Posterior cingulate gyrus (tissue), 11 donors: ENCODE measurements at regions of chr14 and their contacts with region 1.

Region 1: DNA sequence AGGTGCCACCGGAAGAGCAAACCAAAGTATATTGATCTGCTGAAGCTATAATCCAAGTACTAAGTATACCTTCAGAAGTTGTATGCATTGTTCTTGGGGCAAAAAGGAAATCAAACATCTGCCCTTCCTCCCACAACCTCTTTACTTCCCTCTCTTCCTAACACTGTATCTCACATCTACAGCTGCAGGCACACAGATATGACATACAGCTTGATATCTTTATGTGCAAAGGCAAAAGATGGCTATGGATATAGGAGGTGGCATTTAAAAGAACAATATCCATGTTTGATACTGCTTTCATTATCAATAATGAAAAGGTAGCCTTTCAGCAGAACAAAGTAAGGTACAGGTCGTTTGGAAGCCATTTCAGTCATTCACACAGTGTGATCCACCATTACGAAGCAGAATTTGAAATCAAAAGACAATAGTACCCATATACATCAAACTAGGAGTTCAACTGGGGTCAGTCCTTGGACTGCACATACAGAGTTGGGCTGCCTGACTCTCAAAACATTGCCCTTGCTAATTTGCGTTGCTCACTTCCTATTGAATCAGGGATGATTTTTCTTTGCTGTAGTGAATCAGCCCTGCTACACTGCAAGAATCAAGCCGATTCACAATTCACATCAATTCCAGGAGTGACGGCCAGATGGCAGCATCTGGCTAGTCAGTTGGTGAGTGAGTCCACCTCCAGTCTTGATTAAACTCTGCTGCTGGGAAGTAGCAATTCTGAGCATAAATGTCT is 8.9 kb downstream of the ANG start:
- DNase-seq: peak in 7 of 10 donors; percentile 66 to 95 (median 77)

Region 2: DNA sequence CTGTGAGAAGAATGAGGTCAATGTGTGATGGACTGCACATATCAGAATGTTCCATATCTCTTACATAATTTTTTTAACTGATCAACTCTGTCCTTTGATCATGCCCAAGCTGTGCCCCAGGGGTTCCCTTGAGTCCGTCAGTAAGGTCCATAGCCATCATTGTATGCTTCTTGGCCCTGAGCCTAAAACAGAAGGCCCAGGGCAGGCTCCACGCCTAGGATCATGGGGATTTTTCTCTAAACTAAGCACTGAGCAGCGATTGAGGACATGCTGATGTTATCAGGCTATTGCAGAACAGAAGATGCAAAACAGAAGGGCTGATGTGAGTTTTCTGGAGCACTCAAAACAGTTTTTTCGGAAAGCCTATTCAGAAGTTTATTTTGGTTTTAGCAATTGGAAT is 157.5 kb before region 1 on chr14:
- intact Hi-C with region 1: no loop called
- DNase-seq: no peak

Region 3: DNA sequence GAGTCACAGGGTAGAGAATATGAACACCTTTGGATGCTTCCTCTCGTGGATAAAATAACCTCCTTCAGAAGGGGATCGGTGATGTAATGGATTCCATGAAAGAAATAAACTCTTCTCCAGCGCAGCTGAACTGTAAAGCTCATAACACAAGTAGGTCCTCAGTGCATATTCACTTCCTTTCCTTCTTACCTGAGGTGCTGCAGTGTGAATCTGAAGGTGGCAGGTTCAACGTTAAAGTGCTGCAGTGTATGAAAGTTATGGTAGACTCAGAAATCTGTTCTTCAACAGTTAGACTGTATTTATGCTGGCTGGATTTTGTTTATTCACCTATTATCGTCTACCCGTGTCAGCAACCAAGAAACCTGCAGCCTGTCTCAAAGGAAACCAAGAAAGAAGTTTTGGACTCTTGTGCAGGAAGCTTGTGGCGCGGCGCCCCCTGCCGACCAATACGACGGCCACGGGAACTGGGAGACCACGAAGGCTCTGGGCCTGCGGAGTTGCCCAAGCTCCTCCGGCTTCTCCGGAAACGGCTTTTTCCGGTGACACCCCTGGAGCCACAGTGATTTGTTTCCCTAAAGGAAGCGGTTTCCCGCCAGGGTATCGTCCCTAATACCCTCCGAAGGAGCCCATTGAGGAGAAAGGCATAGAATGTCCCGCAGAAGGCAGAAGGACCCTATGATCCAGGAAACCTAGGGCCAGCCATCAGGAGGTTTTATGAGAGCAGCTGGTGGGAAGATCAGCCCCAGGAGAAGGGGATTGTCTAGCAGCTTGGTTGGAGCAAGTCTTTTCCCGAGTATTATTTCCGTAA is 176.1 kb after region 1 on chr14:
- intact Hi-C with region 1: loop called (anchors 5 kb)
- DNase-seq: peak; percentile 47 to 96 (median 80)